Activated B cell treated with CpG ODN at 0.5 μM for 24 hours (primary cell): ENCODE measurements at regions of chr6 and their contacts with region 1.

Region 1: DNA sequence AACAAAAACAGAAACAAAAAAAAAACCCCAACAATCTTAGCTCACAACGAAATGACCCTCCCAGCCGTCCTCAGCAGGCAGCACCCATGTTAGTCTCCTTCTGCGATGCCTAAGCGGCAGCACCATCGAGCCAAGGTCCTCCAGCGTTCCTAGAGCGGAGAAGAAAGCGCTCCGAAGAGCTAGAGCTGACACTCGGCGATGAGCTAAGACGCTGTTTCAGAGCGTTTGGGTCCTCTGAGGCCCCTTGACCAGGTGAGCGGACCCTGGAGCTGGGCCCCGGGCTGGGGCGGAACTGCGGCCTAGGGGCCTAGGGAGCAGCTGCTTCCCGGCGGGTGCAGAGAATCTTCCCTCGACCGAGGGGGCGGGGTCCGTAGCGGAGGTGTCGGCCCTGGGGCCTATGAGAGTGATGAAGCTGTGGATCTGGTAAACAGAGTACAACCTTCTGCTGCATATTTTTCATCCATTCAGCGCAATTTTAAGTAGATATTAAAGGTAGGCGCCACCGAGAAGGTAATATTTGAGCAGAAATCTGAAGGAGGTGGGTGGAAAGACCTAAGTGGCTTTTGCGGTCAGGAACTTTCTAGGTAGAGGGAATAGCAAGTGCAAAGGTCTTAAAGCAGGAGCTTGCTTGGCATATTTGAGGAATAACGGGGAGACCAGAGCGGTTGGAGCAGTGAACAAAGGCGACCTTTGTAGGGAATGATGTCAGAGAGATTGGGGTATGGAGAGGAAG is at the start of gene ZSCAN26:
- DNase-seq: peak; percentile 77
- ATAC-seq: peak; percentile 96
- H3K4me3 Mint-ChIP-seq: no peak within 1 kb of the TSS
- H3K27ac Mint-ChIP-seq: peak within 1 kb of the TSS; percentile 46
- H3K4me1 Mint-ChIP-seq: peaks cover 10% of the 10 kb centered on the region
- H3K27me3 Mint-ChIP-seq: no peaks in the 10 kb centered on the region
- CTCF ChIP-seq: no peak
- total RNA-seq, gene ZSCAN26: 16.0 and 17.8 TPM in 2 replicates

Region 2: DNA sequence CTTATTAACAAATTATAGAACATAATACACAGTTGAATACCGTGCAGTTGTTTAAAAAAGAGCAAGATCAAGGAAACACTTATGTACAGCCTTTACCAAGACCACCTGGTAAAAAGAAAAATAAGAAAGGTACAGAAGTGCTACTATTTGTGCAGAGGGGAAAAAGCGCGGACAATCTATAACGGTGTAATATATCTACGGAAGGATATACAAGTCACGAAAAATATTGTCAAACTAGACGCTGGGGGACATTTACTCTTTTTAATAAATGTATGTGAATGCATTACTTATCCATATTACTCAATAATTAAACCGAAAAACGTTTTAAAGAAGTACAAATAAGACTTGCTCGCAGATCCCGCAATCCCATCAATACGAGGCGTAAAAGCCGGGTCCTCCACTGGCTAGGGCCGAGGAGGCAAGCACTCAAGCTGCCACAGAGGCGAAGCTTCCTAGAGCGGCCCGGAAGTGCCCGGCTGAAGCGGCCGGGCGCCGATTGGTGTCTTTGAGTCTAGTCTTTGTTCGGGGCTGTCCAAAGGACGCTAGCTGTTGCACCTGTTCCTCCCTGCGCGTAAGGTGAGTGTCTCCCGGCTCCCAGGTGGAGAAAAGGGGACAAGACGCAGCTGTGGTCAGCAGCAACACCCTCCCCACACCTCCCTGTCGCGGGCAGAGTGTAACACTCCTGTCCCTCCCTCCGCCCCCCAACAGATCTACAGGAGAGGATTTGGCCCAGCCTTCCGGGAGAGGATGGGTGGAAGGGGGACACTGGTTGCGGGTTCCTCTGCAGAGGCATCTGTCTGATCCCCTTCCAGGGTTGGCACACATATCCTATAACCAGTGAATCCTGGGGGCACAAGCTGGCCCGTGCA is 142.8 kb before region 1 on chr6 and contains the start of gene ZSCAN16:
- CTCF ChIA-PET with region 1: no interaction called
- POLR2A ChIA-PET with region 1: interaction called, 9 read pairs
- intact Hi-C with region 1: loop called (anchors 5 kb)
- DNase-seq: peak; percentile 72
- ATAC-seq: peak; percentile 96
- H3K4me3 Mint-ChIP-seq: peak within 1 kb of the TSS; percentile 97
- H3K27ac Mint-ChIP-seq: peak within 1 kb of the TSS; percentile 95
- H3K4me1 Mint-ChIP-seq: peaks cover 27% of the 10 kb centered on the region
- H3K27me3 Mint-ChIP-seq: no peaks in the 10 kb centered on the region
- CTCF ChIP-seq: no peak
- total RNA-seq, gene ZSCAN16: 10.6 and 12.6 TPM in 2 replicates

Region 3: DNA sequence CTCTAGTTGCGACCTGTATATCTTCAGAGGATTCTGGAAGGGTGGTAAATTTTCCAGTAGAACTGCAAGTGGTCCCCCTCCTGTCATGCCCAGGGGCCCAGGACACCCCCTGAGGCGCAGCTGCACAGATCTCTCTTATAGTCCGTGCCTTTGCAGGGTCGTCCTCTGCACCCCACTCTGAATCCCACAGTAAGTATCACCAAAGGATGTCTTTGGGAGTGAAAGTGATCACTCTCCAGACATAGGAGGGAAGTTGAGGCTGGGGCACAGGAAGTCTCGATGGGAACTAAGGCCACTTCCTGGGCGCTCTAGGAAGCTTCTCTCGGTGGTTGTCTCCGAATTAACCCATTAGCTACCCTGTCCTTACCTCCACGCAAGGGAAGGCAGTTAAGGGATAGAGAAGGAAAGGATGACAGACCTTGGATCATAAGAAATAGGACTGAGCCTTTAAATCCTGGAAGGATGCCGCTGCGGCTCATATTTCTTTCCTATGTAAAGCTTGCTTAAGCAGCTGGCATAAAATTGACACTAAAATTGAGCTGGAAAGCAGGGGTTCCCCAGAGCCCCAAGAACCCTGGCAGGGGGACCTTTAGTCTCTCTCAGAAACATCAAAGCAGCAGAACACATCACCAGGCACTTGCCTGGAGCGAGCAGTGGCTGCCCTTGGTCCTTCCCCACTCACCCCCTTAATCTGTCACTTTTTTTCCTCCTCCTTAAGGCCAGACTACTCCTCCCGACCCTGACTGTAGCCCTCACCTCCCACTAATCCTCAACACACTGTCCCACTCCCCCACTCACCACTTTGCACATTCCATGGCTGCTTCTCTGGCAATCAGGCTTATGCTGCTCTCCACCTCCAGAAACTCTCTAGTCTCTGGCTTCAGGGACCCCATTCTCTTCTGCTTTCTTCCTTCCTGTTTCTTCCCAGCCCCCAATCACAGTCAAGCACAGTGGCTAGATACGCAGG is 14.8 kb before region 1 on chr6 and contains the start of gene ZKSCAN4:
- CTCF ChIA-PET with region 1: interaction called, 8 read pairs
- POLR2A ChIA-PET with region 1: interaction called, 63 read pairs
- intact Hi-C with region 1: loop called (anchors 1 kb)
- DNase-seq: peak; percentile 57
- ATAC-seq: peak; percentile 90
- H3K4me3 Mint-ChIP-seq: peak within 1 kb of the TSS; percentile 95
- H3K27ac Mint-ChIP-seq: peak within 1 kb of the TSS; percentile 80
- H3K4me1 Mint-ChIP-seq: peaks cover 30% of the 10 kb centered on the region
- H3K27me3 Mint-ChIP-seq: peaks cover 2% of the 10 kb centered on the region
- CTCF ChIP-seq: no peak
- total RNA-seq, gene ZKSCAN4: 10.5 and 11.1 TPM in 2 replicates

Region 4: DNA sequence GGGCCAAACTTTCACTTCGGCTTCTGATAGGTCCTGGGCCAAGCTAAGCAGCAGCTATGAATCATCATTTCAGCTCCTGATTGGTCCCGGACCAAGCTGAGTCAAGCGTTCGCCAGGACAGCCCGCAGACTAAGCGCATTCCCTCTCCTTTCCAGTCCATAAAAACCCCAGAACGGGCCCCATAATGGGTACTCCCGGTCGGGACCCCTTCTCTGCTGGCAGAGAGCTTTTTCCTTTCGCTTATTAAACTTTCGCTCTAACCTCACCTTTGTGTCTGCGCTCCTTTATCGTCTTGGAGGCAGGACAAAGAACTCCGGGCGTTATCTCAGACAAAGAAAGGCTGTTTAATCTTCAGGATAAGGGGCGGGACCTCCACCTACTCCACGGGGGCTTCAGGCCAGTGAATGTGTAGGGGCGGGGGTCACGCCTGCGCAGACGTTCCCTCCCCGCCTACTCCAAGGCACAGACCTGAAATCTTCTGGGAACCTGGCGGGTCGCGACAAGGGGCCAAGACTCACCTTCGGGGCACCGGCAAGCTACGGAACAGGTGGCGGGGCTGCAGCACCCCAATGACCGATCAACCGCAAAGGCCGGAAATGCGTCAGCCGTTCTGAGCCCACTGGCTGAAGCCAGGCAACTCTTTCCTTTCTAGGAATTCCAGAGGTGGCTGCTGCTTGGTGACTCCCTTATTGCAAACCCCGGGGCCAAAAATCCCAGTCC is 68.6 kb after region 1 on chr6 and contains the start of gene ZSCAN31:
- CTCF ChIA-PET with region 1: no interaction called
- POLR2A ChIA-PET with region 1: interaction called, 20 read pairs
- intact Hi-C with region 1: loop called (anchors 10 kb)
- DNase-seq: peak; percentile 61
- ATAC-seq: peak; percentile 93
- H3K4me3 Mint-ChIP-seq: no peak within 1 kb of the TSS
- H3K27ac Mint-ChIP-seq: no peak within 1 kb of the TSS
- H3K4me1 Mint-ChIP-seq: no peaks in the 10 kb centered on the region
- H3K27me3 Mint-ChIP-seq: no peaks in the 10 kb centered on the region
- CTCF ChIP-seq: no peak
- total RNA-seq, gene ZSCAN31: 1.0 and 3.6 TPM in 2 replicates

Region 5: GRCh38 chr6:28355743-28356665 is 88.9 kb after region 1 on chr6:
- CTCF ChIA-PET with region 1: interaction called, 13 read pairs
- POLR2A ChIA-PET with region 1: interaction called, 5 read pairs
- intact Hi-C with region 1: no loop called
- DNase-seq: peak; percentile 41
- ATAC-seq: peak; percentile 85
- H3K4me3 Mint-ChIP-seq: peak overlapping the region; percentile 91
- H3K27ac Mint-ChIP-seq: peak overlapping the region; percentile 71
- H3K4me1 Mint-ChIP-seq: peaks cover 21% of the 10 kb centered on the region
- H3K27me3 Mint-ChIP-seq: no peaks in the 10 kb centered on the region
- CTCF ChIP-seq: peak; percentile 82